ENCODE measurements at regions of chr1 and their contacts with region 1.

Region 1: GRCh38 chr1:36208978-36209703 is 15.1 kb upstream of the THRAP3 start:
- DNase-seq: no peak
- H3K4me3 ChIP-seq: no peak overlapping the region
- H3K4me3 Mint-ChIP-seq: no peak overlapping the region
- H3K27ac ChIP-seq: no peak overlapping the region
- H3K27ac Mint-ChIP-seq: no peak overlapping the region
- H3K4me1 ChIP-seq: no peaks in the 10 kb centered on the region
- H3K4me1 Mint-ChIP-seq: no peaks in the 10 kb centered on the region
- H3K27me3 ChIP-seq: no peaks in the 10 kb centered on the region
- H3K27me3 Mint-ChIP-seq: no peaks in the 10 kb centered on the region

Region 2: GRCh38 chr1:36239941-36240637 is 30.9 kb after region 1 on chr1:
- CTCF ChIA-PET with region 1: no interaction called
- POLR2A ChIA-PET with region 1: interaction called, 15 read pairs
- DNase-seq: no peak
- H3K4me3 ChIP-seq: no peak overlapping the region
- H3K4me3 Mint-ChIP-seq: peak overlapping the region in 2 of 7 donors; percentile 4 to 37
- H3K27ac ChIP-seq: no peak overlapping the region
- H3K27ac Mint-ChIP-seq: peak overlapping the region in 5 of 8 donors; percentile 9 to 54 (median 37)
- H3K4me1 ChIP-seq: peaks cover 23% of the 10 kb centered on the region
- H3K4me1 Mint-ChIP-seq: peaks cover 39 to 75% (median 51%) of the 10 kb centered on the region in 3 donors
- H3K27me3 ChIP-seq: no peaks in the 10 kb centered on the region
- H3K27me3 Mint-ChIP-seq: no peaks in the 10 kb centered on the region

Measured in CD8-positive, alpha-beta memory T cell (primary cell).